Activated CD4-positive, alpha-beta memory T cell treated with anti-CD3 and anti-CD28 coated beads for 36 hours (primary cell): ENCODE measurements at regions of chr20 and their contacts with region 1.

Region 1: GRCh38 chr20:44521484-44522481 is at the start of gene SERINC3:
- DNase-seq: peak; percentile 98
- H3K4me3 Mint-ChIP-seq: peak within 1 kb of the TSS; percentile 83
- H3K27ac Mint-ChIP-seq: peak within 1 kb of the TSS; percentile 88
- H3K4me1 Mint-ChIP-seq: peaks cover 53% of the 10 kb centered on the region
- H3K27me3 Mint-ChIP-seq: no peaks in the 10 kb centered on the region
- total RNA-seq, gene SERINC3: 57.3 to 58.6 TPM

Region 2: DNA sequence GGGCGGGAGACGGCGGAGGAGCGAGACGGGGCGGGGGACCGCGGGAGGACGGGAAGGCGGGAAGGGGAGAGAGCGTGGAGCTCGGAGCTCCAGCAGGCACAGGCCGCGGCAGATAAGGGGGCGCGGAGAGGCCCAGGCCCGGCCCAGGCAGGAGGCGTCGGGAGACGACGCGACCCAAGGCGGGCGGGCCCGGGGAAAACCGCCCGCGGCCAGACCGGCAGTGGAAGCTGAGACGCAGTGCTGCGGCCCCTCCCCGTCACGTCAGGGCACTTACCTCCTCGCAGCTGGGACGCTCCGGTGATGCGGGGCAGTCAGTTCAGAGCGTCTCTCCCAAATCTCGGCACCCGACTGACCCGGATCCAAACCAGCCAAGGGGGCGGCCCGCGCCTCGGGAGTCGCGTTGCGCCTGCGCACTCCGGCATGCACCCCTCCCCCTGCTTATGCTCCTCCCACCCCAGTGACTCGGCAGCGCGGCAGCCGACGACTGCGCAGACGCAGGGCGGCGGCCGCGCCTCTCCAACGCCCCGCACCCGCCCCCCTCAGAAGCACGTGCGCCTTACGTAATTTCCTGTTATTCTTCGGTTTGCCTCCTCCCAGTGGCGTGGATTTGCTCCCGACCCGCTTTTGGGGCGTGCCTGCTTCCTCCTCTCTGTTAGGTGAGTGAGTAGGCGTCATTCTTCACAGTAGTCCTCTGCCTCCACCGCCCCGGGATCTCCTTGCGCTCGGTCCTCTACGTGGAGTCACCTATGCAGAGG is 311.2 kb before region 1 on chr20 and contains the start of gene OSER1:
- CTCF ChIA-PET with region 1: no interaction called
- POLR2A ChIA-PET with region 1: no interaction called
- intact Hi-C with region 1: loop called (anchors 10 kb)
- DNase-seq: peak; percentile 99
- H3K4me3 Mint-ChIP-seq: peak within 1 kb of the TSS; percentile 98
- H3K27ac Mint-ChIP-seq: peak within 1 kb of the TSS; percentile 93
- H3K4me1 Mint-ChIP-seq: peaks cover 61% of the 10 kb centered on the region
- H3K27me3 Mint-ChIP-seq: peaks cover 1% of the 10 kb centered on the region
- total RNA-seq, gene OSER1: 23.4 to 24.2 TPM

Region 3: GRCh38 chr20:44460795-44461141 is 61.0 kb before region 1 on chr20:
- CTCF ChIA-PET with region 1: no interaction called
- POLR2A ChIA-PET with region 1: no interaction called
- intact Hi-C with region 1: no loop called
- DNase-seq: no peak
- H3K4me3 Mint-ChIP-seq: no peak overlapping the region
- H3K27ac Mint-ChIP-seq: no peak overlapping the region
- H3K4me1 Mint-ChIP-seq: no peaks in the 10 kb centered on the region
- H3K27me3 Mint-ChIP-seq: no peaks in the 10 kb centered on the region

Region 4: DNA sequence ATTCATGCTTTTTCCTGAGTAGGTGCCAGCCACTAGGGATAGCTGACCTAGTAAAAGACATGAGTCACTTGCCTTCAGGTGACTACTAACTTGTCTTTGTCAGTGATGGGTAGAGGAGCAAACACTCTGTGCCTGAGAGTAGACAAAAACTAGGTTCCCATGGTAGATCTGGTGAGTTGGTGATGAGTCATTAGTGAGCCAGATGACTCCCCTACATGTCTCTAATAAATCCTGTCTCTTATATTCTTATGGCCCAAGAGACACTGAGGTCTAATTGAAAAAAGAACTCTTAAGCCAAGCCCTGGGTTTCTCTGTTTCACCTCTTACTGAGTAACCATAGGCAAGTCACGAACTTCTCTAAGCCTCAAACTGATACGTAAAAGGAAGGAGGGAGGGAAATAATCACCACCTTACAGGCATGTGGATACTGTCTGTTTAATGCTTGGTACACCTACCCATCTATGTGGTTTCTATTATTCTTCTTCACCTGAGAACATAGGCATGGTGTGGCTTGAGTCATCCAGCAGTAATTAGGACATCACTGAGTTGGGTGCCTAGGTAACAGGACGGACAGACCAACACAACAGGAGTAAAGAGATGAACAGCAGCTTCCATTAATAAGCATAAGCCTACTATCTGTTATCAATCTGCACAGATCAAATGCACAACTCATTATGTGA is 25.8 kb before region 1 on chr20:
- CTCF ChIA-PET with region 1: interaction called, 3 read pairs
- POLR2A ChIA-PET with region 1: interaction called, 3 read pairs
- intact Hi-C with region 1: loop called (anchors 1 kb)
- DNase-seq: no peak
- H3K4me3 Mint-ChIP-seq: no peak overlapping the region
- H3K27ac Mint-ChIP-seq: peak overlapping the region; percentile 88
- H3K4me1 Mint-ChIP-seq: peaks cover 47% of the 10 kb centered on the region
- H3K27me3 Mint-ChIP-seq: no peaks in the 10 kb centered on the region

Region 5: DNA sequence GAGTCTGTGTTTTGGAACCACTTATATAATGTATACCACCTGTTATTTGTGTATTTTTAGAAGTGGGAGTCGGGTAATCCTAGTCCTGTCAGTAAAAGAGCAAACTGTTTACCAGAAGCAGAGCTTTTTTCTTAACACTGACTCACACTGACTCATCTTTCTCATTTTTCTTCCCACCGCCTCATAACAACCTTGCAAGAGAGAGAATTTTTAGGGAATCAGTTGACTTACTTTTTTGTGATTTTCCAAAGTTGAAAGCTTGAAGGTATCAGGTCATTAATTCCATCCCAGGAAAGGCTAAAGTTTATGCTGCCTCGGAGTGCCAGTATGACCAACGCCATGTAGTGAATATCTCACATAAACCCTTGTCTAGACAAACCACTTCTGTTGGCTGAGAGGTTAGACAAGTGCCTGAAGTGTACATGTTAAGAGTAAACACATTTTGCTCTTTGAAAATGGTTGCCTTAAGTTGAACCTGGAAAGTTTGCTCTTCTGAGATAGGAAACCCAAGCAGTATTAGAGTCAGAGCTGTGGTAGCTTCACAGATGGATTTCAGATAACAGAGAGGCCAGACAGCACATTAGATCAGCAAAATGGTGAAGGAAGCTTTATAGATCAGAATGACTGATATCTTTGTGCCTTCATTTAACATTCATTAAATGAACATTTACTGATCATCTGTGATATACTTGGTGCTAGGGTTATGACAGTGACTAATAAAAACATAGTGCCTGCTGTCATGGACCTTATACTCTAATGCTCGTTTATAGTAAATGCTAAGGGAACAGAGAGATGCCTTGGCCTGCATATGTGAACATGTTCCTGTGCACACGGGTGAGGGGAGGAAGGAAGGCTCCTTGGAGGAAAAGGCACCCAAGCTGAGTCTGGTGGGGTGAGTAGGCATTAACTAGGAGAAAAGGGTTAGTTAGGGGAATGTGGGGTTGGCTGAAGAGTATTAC is 31.4 kb after region 1 on chr20:
- CTCF ChIA-PET with region 1: interaction called, 3 read pairs
- POLR2A ChIA-PET with region 1: no interaction called
- intact Hi-C with region 1: loop called (anchors 2 kb)
- DNase-seq: no peak
- H3K4me3 Mint-ChIP-seq: no peak overlapping the region
- H3K27ac Mint-ChIP-seq: peak overlapping the region; percentile 65
- H3K4me1 Mint-ChIP-seq: peaks cover 16% of the 10 kb centered on the region
- H3K27me3 Mint-ChIP-seq: no peaks in the 10 kb centered on the region

Region 6: GRCh38 chr20:44966030-44966961 is 444.5 kb after region 1 on chr20 and contains the start of gene STK4:
- CTCF ChIA-PET with region 1: no interaction called
- POLR2A ChIA-PET with region 1: no interaction called
- intact Hi-C with region 1: loop called (anchors 5 kb)
- DNase-seq: peak; percentile 97
- H3K4me3 Mint-ChIP-seq: peak within 1 kb of the TSS; percentile 95
- H3K27ac Mint-ChIP-seq: peak within 1 kb of the TSS; percentile 99
- H3K4me1 Mint-ChIP-seq: peaks cover 58% of the 10 kb centered on the region
- H3K27me3 Mint-ChIP-seq: no peaks in the 10 kb centered on the region
- total RNA-seq, gene STK4: 126 to 128 TPM

Region 7: DNA sequence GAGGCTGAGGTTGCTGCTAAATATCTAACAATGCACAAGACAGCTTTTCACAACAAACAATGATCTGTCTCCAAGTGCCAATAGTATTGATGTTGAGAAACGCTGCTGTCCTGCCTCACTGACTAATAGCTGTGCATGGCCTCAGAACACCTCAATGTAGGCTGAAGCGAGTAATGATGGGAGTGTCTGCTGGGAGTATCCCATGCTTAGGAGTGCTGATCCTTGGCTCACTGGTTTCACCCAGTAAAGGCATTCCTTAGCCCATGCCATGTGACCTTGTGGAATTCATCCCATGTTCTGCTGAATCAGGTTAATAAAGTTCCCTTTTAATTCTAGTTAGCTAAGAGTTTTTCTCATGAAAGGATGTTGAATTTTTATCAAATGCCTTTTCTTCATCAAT is 606.3 kb after region 1 on chr20:
- CTCF ChIA-PET with region 1: no interaction called
- POLR2A ChIA-PET with region 1: no interaction called
- intact Hi-C with region 1: no loop called
- DNase-seq: no peak
- H3K4me3 Mint-ChIP-seq: no peak overlapping the region
- H3K27ac Mint-ChIP-seq: no peak overlapping the region
- H3K4me1 Mint-ChIP-seq: no peaks in the 10 kb centered on the region
- H3K27me3 Mint-ChIP-seq: peaks cover 20% of the 10 kb centered on the region